ENCODE measurements at regions of chr3 and their contacts with region 1.

Region 1: DNA sequence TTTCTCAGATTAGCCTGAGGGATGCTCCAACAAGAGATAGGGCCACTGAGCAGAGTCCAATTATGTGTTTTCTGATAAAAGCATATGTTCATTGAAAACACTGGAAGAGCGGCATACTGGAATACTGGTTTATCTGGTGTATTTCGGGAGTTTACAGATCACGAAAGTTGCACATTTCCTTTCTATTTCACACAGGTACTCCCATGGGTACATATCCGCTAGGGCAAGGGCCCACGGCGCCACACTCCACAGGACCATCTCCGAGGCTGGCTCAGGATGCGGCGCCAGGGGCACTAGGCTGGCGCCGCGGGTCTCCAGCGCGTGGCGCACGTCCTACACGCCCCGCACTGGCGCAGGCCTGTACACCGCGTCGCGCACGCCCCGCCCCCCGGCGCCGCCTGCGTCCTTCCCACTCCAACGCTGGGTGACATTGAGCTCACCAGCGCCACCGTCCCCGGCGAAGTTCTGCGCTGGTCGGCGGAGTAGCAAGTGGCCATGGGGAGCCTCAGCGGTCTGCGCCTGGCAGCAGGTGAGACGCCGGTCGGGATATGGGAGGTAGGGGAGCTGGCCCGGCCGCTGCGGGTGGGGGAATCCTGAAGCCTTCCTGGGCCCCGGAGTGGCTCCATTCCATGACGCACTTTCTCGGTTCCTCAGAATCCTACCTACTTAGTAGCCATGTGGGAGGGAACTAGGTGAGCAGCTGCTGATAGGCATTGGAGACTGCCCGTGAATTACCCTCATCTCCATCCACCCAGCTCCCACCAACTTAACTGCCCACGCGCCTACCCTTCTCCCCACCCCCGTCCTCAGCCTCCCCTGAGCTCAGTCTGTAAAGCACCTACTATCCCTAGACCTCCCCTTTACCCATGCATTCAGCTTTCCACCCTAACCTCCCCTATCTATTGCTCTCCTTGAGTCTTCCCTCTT is at the start of gene FAM162A:
- DNase-seq: peak; percentile 87 to 96
- H3K4me3 ChIP-seq: peak within 1 kb of the TSS; percentile 85
- H3K27ac ChIP-seq: peak within 1 kb of the TSS; percentile 66
- H3K4me1 ChIP-seq: peaks cover 18% of the 10 kb centered on the region; the same call in 1 of the 2 replicates
- H3K27me3 ChIP-seq: no peaks in the 10 kb centered on the region
- CTCF ChIP-seq: peak; percentile 64
- total RNA-seq, gene FAM162A: 36.8 and 41.0 TPM in 2 replicates

Region 2: DNA sequence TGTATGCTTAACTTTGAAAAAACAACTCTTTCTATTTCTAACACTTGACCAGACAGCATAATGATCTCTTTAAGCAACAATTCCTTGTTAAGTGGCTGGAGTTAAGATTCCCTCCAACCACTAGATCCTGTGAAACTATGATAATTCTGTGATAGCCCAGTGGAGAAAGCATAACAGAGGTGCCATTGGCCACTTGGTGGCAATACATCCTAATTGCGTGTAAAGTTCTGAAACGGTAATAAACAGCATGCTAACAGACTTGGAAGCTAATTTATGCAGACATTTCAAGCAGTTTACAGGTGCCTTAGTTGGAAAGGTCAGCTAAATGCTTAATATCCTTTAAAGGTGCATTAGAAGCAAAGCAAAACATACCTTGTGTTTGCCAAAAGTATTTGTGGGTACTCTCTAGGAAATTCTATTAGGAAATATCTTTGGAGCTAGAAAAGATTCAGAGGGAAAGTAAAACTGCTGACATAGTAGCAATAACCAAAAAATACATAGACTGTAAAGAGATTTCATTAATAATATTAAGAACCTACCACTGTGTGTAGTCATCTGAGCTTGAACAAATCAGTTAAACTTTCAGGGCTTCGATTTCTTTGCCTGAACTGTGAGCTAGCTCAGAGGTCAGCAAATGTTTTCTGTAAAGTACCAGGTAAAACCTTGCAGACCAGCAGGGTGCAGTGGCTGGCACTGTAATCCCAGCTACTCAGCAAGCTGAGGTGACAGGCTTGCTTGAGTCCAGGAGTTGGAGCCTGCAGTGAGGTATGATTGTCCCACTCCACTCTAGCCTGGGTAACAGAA is 78.0 kb before region 1 on chr3:
- CTCF ChIA-PET with region 1: interaction called, 5 read pairs
- POLR2A ChIA-PET with region 1: no interaction called
- intact Hi-C with region 1: loop called (anchors 1 kb)
- DNase-seq: peak; percentile 24 to 41
- H3K4me3 ChIP-seq: no peak overlapping the region
- H3K27ac ChIP-seq: no peak overlapping the region
- H3K4me1 ChIP-seq: peaks cover 16% of the 10 kb centered on the region
- H3K27me3 ChIP-seq: no peaks in the 10 kb centered on the region
- CTCF ChIP-seq: peak; percentile 53

Region 3: DNA sequence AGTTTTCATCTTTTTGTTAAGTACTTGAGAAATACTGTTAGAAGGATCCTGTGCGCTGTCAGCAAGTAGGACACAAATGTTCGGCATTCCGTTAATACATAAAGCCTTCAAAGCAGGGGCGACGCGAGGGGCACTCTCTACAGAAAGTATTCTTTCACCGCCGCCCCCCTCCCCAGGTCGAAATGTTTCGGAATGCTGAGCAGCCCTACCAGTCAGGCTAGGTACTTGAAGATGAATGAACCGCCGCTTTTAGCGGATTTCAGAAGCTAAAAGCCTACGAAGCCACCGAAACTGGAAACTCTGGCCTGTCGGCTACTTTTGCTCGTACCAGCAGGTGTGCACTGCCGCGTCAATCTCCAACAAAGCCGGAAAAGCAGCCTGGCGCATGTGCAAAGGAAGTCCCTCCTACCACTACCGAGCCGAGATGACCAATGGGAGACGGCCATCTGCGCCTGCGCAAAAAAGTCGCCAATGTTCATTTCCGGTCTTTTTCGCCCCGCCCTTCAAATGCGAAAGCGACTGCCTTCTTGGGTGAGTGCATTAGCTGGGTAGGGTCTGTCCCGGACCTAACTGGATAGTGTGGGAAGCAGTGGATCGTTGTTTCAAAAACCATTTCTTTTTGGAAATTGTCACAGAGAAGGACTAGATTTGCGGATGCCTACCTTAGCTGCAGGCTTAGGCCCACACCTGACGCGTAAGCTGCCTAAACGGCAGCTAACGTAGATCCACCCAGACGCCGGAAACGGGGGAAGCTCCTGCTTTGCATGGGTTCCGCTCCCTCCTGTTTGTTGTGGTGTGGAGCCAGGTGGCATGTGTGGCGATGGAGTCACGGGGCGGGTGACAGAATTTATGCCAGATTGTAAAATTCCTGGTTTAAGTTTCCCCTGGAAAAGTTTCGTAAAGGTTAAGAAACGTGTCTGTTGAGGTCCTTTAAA is 32.0 kb after region 1 on chr3 and contains the start of gene WDR5B:
- CTCF ChIA-PET with region 1: interaction called, 10 read pairs
- POLR2A ChIA-PET with region 1: interaction called, 12 read pairs
- intact Hi-C with region 1: loop called (anchors 1 kb)
- DNase-seq: peak; percentile 92 to 99
- H3K4me3 ChIP-seq: peak within 1 kb of the TSS; percentile 76
- H3K27ac ChIP-seq: peak within 1 kb of the TSS; percentile 76
- H3K4me1 ChIP-seq: peaks cover 19% of the 10 kb centered on the region
- H3K27me3 ChIP-seq: no peaks in the 10 kb centered on the region
- CTCF ChIP-seq: peak; percentile 23; the same call in 1 of the 2 replicates
- total RNA-seq, gene WDR5B: 4.5 and 5.8 TPM in 2 replicates

Region 4: DNA sequence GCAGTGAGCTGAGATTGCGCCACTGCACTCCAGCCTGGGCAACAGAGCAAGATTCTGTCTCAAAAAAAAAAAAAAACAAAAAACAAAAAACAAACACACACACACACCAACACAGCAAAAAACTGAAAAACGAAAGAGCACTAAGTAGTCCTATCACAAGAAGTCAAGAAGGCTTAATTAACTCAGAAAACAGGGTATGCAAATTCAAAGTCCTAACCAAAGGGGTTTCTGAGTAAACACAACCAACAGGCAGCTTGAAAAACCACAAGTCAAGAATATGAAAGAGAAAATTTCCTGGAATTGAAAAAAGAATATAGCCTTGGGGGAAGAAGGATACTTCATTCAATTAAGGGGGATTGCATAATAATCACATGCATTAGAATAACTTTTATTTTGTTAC is 258.9 kb after region 1 on chr3:
- CTCF ChIA-PET with region 1: no interaction called
- POLR2A ChIA-PET with region 1: interaction called, 11 read pairs
- intact Hi-C with region 1: no loop called
- DNase-seq: no peak
- H3K4me3 ChIP-seq: no peak overlapping the region
- H3K27ac ChIP-seq: no peak overlapping the region
- H3K4me1 ChIP-seq: no peaks in the 10 kb centered on the region
- H3K27me3 ChIP-seq: no peaks in the 10 kb centered on the region
- CTCF ChIP-seq: no peak

Region 5: GRCh38 chr3:122918576-122919290 is 534.7 kb after region 1 on chr3:
- CTCF ChIA-PET with region 1: interaction called, 10 read pairs
- POLR2A ChIA-PET with region 1: no interaction called
- intact Hi-C with region 1: no loop called
- DNase-seq: no peak
- H3K4me3 ChIP-seq: no peak overlapping the region
- H3K27ac ChIP-seq: no peak overlapping the region
- H3K4me1 ChIP-seq: no peaks in the 10 kb centered on the region; the same call in 1 of the 2 replicates
- H3K27me3 ChIP-seq: peaks cover 6% of the 10 kb centered on the region; the same call in 1 of the 2 replicates
- CTCF ChIP-seq: no peak

Measured in PC-9 (cell line).